ENCODE measurements at regions of chr12 and their contacts with region 1.

Region 1: GRCh38 chr12:114684098-114684869 is at the start of gene TBX3:
- DNase-seq: peak; percentile 77
- CTCF ChIP-seq: no peak

Region 2: GRCh38 chr12:113462117-113462774 is 1222.0 kb before region 1 on chr12:
- in situ Hi-C with region 1: loop called (anchors 25 kb)
- DNase-seq: peak; percentile 82
- CTCF ChIP-seq: peak; percentile 93

Region 3: GRCh38 chr12:114403011-114403689 is 281.1 kb before region 1 on chr12:
- in situ Hi-C with region 1: loop called (anchors 25 kb)
- DNase-seq: peak; percentile 12
- CTCF ChIP-seq: no peak

Region 4: GRCh38 chr12:115752913-115753726 is 1068.8 kb after region 1 on chr12:
- in situ Hi-C with region 1: loop called (anchors 25 kb)
- DNase-seq: peak; percentile 24
- CTCF ChIP-seq: peak; percentile 56

Measured in GM13977 (cell line).